ENCODE measurements at regions of chr17 and their contacts with region 1.

Region 1: GRCh38 chr17:57946798-57947358 is 8.3 kb downstream of the CUEDC1 start:
- DNase-seq: peak; percentile 78

Region 2: GRCh38 chr17:57875309-57876115 is 71.4 kb before region 1 on chr17:
- intact Hi-C with region 1: loop called in 1 of 2 experiments (anchors 5 kb)
- DNase-seq: peak; percentile 94

Region 3: DNA sequence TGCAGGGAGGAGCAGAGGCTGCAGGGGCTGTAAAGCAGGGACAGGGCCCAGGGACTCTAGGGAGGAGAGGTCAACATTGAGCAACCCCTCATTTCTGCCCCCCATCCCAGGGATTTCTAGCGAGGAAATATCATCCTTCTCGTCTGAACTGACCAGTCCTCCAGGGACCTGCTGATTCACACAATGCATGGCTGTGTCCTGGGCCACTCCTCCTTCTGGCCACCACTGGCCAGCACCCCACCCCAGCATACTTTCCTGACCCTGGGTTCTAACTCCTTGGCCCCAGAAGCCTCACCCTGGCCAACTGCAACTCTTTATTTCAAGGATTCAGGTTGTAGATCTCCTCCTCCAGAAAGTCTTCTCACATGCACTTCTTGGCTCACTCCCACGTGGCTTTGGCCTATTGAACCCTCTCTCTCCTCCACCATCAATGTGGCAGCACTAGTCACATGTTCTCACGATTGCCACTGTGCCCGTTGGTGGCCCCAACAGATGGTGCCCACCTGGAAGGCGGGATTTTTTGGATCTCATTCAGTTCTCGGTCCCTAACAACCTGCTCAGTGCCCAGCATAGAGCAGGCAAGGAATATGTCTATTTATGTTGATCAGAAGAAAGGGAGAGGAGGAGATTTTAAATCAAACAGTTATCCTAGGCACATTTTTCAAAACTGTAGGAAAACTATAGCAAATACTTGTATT is 33.2 kb before region 1 on chr17:
- intact Hi-C with region 1: loop called in 1 of 2 experiments (anchors 1 kb)
- DNase-seq: no peak

Measured in posterior vena cava (tissue), 2 donors.